CD14-positive monocyte (primary cell): ENCODE measurements at regions of chr17 and their contacts with region 1.

Region 1: DNA sequence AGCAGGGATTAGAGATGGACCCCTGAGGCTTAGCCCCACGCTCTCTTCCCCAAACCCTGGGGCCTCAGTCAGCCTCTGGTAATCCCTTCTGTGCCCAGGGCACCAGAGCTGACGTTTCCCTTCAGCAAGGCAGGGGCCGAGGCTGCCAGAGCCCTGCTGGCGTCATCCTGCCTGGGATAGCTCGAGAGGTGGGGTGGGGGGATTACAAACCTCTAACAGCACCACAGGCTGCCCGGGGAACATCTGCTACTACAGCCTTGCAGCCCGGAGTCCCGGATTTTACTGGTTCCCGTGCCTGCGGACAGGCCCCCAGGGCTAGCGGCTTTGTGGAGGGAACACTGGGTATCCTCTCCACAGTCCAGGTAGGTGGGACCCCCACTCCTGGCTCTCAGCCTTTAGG is at the start of gene AANAT:
- DNase-seq: no peak
- H3K4me3 ChIP-seq: no peak within 1 kb of the TSS
- H3K4me3 Mint-ChIP-seq: no peak within 1 kb of the TSS
- H3K27ac ChIP-seq: no peak within 1 kb of the TSS
- H3K27ac Mint-ChIP-seq: peak within 1 kb of the TSS in 4 of 7 donors; percentile 40 to 61 (median 48)
- H3K4me1 ChIP-seq: peaks cover 8 to 9% of the 10 kb centered on the region in 2 donors
- H3K4me1 Mint-ChIP-seq: peaks cover 16% of the 10 kb centered on the region
- H3K27me3 ChIP-seq: no peaks in the 10 kb centered on the region
- H3K27me3 Mint-ChIP-seq: peaks cover 0 to 4% (median 2%) of the 10 kb centered on the region in 3 donors
- CTCF ChIP-seq: no peak
- polyA plus RNA-seq, gene AANAT: not detected

Region 2: DNA sequence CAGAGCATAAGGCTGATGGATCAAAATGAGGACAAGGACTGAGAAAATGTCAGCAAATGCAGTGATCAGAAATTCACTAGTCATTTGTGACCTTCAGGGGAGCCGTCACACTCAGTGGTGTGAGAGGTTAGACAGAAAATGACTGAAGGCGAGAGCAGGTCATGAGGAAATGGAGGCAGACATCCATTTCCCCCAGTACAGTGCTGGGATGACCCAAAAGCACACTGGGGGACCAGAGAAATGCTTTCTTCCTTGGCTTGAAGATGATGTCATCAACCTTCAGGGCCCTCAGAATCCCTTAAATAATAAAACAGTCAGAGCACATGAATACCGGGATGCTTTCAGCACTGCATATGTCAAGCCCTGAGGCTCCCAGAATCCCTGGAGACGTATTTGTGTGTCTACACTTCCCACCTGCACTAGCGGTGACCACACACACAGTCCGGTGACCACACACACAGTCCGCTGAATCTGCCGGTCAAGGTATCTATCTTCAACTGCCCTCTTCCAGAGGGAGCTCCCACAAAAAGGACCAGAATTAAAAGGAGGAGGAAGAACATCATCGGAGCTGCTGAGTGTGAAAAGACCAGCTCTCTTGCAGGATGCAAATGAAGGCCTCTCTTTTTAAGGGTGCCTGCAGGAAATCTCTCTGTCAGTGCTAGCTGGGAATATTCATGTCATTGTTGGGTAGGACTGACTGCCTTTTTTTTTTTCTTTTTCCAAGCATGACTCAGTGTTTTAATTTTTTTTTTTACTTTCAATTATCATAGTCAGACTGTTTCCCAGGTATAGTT is 22.7 kb before region 1 on chr17:
- intact Hi-C with region 1: no loop called
- DNase-seq: no peak
- H3K4me3 ChIP-seq: no peak overlapping the region
- H3K4me3 Mint-ChIP-seq: no peak overlapping the region
- H3K27ac ChIP-seq: no peak overlapping the region
- H3K27ac Mint-ChIP-seq: peak overlapping the region in 2 of 7 donors; percentile 5 to 62
- H3K4me1 ChIP-seq: peaks cover 15 to 21% of the 10 kb centered on the region in 2 donors
- H3K4me1 Mint-ChIP-seq: peaks cover 58% of the 10 kb centered on the region
- H3K27me3 ChIP-seq: no peaks in the 10 kb centered on the region
- H3K27me3 Mint-ChIP-seq: no peaks in the 10 kb centered on the region
- CTCF ChIP-seq: no peak

Region 3: DNA sequence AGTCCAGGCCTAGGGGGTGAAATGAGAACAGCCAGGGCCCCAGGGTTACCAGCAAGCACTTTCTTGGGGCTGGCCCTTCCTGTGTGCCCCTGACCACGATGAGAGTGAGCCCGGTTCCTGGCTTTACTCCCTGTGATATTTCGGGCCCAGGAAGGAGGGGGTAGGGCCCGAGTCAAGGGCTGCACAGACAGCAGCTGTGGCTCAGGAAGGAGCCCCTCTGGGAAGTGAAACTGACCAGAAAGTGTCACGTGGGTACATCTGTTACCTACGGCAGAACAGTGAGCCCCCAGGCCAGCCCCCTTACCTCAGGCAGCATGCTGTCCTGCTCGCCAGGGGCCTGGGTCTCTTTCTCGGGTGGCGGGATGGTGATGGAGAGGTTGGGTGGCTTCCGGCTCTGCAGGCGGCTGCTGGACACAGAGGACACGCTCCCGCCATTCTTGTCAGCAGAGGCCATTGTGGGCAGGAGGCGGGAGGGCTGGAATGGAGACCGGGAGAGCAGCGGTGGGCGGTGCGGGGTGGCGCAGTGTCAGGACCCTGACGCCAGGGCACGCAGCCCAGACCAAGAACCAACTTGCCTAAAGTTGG is 13.8 kb after region 1 on chr17:
- intact Hi-C with region 1: loop called in 1 of 2 experiments (anchors 2 kb)
- DNase-seq: peak in 2 of 3 donors; percentile 57
- H3K4me3 ChIP-seq: peak overlapping the region in 1 of 3 experiments; percentile 49
- H3K4me3 Mint-ChIP-seq: peak overlapping the region; percentile 24 to 61
- H3K27ac ChIP-seq: peak overlapping the region; percentile 65 to 80
- H3K27ac Mint-ChIP-seq: peak overlapping the region; percentile 79 to 98 (median 88)
- H3K4me1 ChIP-seq: peaks cover 69 to 70% of the 10 kb centered on the region in 2 donors
- H3K4me1 Mint-ChIP-seq: peaks cover 62% of the 10 kb centered on the region
- H3K27me3 ChIP-seq: no peaks in the 10 kb centered on the region
- H3K27me3 Mint-ChIP-seq: peaks cover 0 to 6% (median 3%) of the 10 kb centered on the region in 3 donors
- CTCF ChIP-seq: no peak

Region 4: GRCh38 chr17:76506408-76507349 is 39.3 kb after region 1 on chr17:
- intact Hi-C with region 1: loop called (anchors 1 to 2 kb)
- DNase-seq: peak; percentile 76 to 82 (median 79)
- H3K4me3 ChIP-seq: no peak overlapping the region
- H3K4me3 Mint-ChIP-seq: no peak overlapping the region
- H3K27ac ChIP-seq: no peak overlapping the region
- H3K27ac Mint-ChIP-seq: peak overlapping the region in 1 of 7 donors; percentile 26
- H3K4me1 ChIP-seq: peaks cover 52 to 57% of the 10 kb centered on the region in 2 donors
- H3K4me1 Mint-ChIP-seq: peaks cover 59% of the 10 kb centered on the region
- H3K27me3 ChIP-seq: no peaks in the 10 kb centered on the region
- H3K27me3 Mint-ChIP-seq: peaks cover 8 to 10% (median 9%) of the 10 kb centered on the region in 3 donors
- CTCF ChIP-seq: peak; percentile 95

Region 5: DNA sequence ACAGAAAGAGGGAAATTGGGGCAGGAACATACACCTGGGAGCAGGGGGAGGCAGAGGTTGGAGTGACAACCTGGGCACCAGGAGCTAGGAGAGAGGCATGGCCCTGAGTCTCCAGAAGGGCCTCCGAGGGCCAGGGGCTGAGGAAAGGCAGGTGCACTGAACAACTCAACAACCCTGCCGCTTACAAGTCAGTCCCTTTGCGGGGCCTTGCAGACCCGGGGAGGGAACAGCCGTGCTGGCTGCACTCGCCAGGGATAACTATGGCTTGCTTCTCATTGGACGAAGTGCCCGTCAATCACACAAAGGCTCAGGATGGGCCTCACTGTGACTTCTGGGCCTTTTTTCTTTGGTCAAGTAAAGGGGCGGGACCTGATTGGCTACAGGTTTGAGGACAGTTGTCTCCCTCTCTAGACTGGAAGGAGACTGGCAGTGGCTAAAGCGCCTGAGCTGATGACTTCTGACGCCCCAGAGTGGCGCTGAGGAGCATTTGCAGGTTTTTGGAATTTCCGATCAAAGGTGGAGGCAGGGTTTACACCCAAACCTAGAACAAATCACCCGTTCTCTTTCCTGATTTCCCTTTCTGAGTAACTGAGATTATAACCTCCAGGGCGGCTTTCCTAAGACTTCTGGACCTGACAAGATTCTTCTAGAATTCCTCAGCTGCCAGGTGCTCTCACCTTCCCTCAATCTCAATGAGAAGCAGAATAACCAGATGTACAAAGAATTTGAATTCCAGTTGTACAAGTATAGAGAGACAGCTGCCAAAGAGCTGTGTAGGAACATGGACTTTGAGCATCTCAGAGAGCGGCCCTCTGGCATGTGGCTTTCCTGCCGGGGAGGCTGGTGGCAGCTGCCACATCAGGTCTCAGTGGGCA is 145.8 kb after region 1 on chr17:
- intact Hi-C with region 1: loop called in 1 of 2 experiments (anchors 10 kb)
- DNase-seq: peak in 2 of 3 donors; percentile 20 to 27
- H3K4me3 ChIP-seq: no peak overlapping the region
- H3K4me3 Mint-ChIP-seq: no peak overlapping the region
- H3K27ac ChIP-seq: no peak overlapping the region
- H3K27ac Mint-ChIP-seq: peak overlapping the region in 1 of 7 donors; percentile 20
- H3K4me1 ChIP-seq: peaks cover 7 to 8% of the 10 kb centered on the region in 2 donors
- H3K4me1 Mint-ChIP-seq: peaks cover 3% of the 10 kb centered on the region
- H3K27me3 ChIP-seq: no peaks in the 10 kb centered on the region
- H3K27me3 Mint-ChIP-seq: peaks cover 0 to 5% (median 3%) of the 10 kb centered on the region in 3 donors
- CTCF ChIP-seq: no peak